AG04449 (cell line): ENCODE measurements at regions of chr3 and their contacts with region 1.

Region 1: GRCh38 chr3:150495563-150496168 is 50.6 kb downstream of the SERP1 start:
- DNase-seq: peak; percentile 5
- H3K4me3 ChIP-seq: no peak overlapping the region
- CTCF ChIP-seq: peak; percentile 34

Region 2: GRCh38 chr3:150216041-150216811 is 279.4 kb before region 1 on chr3:
- CTCF ChIA-PET with region 1: interaction called, 15 read pairs
- POLR2A ChIA-PET with region 1: no interaction called
- DNase-seq: peak; percentile 68
- H3K4me3 ChIP-seq: no peak overlapping the region
- CTCF ChIP-seq: no peak

Region 3: DNA sequence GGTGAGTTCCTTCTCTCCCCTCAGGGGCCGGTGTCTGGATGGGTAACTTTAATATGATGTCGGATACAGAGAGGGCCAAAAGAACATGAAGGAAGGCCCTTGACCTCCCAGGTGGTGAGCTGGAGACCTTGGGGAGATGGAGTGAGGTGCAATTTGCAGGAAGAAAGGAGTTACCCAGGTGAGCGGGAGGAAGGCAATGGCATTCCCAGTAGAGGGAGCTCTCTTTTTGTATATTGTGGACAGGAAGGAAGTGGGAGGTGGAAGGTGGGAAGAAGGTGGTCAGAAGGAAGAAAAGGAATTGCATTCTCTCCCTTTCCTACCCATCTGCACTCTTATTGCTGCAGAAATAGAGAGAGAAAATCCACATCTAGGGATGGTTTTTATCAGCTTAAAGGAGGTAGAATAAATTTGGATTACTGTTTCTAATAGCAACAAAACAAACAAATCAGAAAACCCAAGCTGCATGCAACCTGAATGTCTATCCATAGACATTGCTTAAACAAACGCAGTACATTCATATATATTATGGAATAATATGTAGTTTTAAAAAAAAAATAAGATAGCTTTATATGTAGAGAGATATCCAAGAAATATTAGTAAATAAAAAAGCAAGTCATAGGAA is 256.6 kb before region 1 on chr3:
- CTCF ChIA-PET with region 1: interaction called, 18 read pairs
- POLR2A ChIA-PET with region 1: no interaction called
- DNase-seq: no peak
- H3K4me3 ChIP-seq: no peak overlapping the region
- CTCF ChIP-seq: no peak

Region 4: GRCh38 chr3:150286390-150287147 is 209.1 kb before region 1 on chr3:
- CTCF ChIA-PET with region 1: interaction called, 11 read pairs
- POLR2A ChIA-PET with region 1: no interaction called
- DNase-seq: no peak
- H3K4me3 ChIP-seq: no peak overlapping the region
- CTCF ChIP-seq: peak; percentile 31

Region 5: GRCh38 chr3:150414258-150414657 is 81.4 kb before region 1 on chr3:
- CTCF ChIA-PET with region 1: interaction called, 16 read pairs
- POLR2A ChIA-PET with region 1: interaction called, 4 read pairs
- DNase-seq: no peak
- H3K4me3 ChIP-seq: peak overlapping the region; percentile 97
- CTCF ChIP-seq: no peak

Region 6: GRCh38 chr3:150428562-150428961 is 67.1 kb before region 1 on chr3:
- CTCF ChIA-PET with region 1: interaction called, 14 read pairs
- POLR2A ChIA-PET with region 1: no interaction called
- DNase-seq: no peak
- H3K4me3 ChIP-seq: no peak overlapping the region
- CTCF ChIP-seq: no peak

Region 7: DNA sequence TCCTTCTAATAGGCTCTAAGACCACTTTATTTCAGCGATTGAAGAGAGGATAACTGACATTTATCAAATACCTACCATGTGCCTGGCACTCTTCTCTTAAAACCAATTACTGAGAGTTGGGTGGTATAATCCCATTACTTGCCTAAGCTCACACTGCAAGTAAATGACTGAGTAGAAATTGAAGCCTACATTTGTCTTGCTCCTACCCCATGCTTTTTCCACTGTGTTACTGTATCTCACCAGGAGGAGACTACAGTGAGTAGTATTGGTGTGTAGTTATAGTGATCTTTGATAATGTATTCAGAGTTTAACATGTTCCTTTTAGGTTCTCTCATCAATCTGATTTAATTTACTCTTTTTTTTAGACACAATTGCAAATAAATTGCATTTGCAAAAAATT is 71.7 kb after region 1 on chr3:
- CTCF ChIA-PET with region 1: no interaction called
- POLR2A ChIA-PET with region 1: no interaction called
- DNase-seq: no peak
- H3K4me3 ChIP-seq: no peak overlapping the region
- CTCF ChIP-seq: no peak